ENCODE measurements at regions of chr7 and their contacts with region 1.

Region 1: GRCh38 chr7:44797329-44798251 is 1.1 kb downstream of the PPIA start:
- DNase-seq: peak; percentile 91
- H3K4me3 Mint-ChIP-seq: peak overlapping the region; percentile 97
- H3K27ac Mint-ChIP-seq: peak overlapping the region; percentile 99
- H3K4me1 Mint-ChIP-seq: peaks cover 31% of the 10 kb centered on the region
- H3K27me3 Mint-ChIP-seq: no peaks in the 10 kb centered on the region

Region 2: GRCh38 chr7:44490351-44491200 is 307.0 kb before region 1 on chr7 and contains the start of gene NUDCD3:
- CTCF ChIA-PET with region 1: interaction called, 3 read pairs
- POLR2A ChIA-PET with region 1: interaction called, 5 read pairs
- intact Hi-C with region 1: loop called (anchors 5 kb)
- DNase-seq: peak; percentile 89
- H3K4me3 Mint-ChIP-seq: peak within 1 kb of the TSS; percentile 87
- H3K27ac Mint-ChIP-seq: peak within 1 kb of the TSS; percentile 96
- H3K4me1 Mint-ChIP-seq: peaks cover 40% of the 10 kb centered on the region
- H3K27me3 Mint-ChIP-seq: no peaks in the 10 kb centered on the region
- total RNA-seq, gene NUDCD3: 88.9 to 92.4 TPM

Region 3: GRCh38 chr7:44606450-44607254 is 190.9 kb before region 1 on chr7 and contains the start of gene OGDH:
- CTCF ChIA-PET with region 1: interaction called, 3 read pairs
- POLR2A ChIA-PET with region 1: interaction called, 34 read pairs
- intact Hi-C with region 1: loop called (anchors 1 kb)
- DNase-seq: peak; percentile 100
- H3K4me3 Mint-ChIP-seq: peak within 1 kb of the TSS; percentile 82
- H3K27ac Mint-ChIP-seq: peak within 1 kb of the TSS; percentile 98
- H3K4me1 Mint-ChIP-seq: peaks cover 36% of the 10 kb centered on the region
- H3K27me3 Mint-ChIP-seq: no peaks in the 10 kb centered on the region
- total RNA-seq, gene OGDH: 103 to 105 TPM

Region 4: GRCh38 chr7:44735403-44736165 is 62.0 kb before region 1 on chr7:
- CTCF ChIA-PET with region 1: no interaction called
- POLR2A ChIA-PET with region 1: interaction called, 3 read pairs
- intact Hi-C with region 1: loop called (anchors 2 kb)
- DNase-seq: peak; percentile 62
- H3K4me3 Mint-ChIP-seq: peak overlapping the region; percentile 4
- H3K27ac Mint-ChIP-seq: peak overlapping the region; percentile 73
- H3K4me1 Mint-ChIP-seq: peaks cover 19% of the 10 kb centered on the region
- H3K27me3 Mint-ChIP-seq: no peaks in the 10 kb centered on the region

Region 5: DNA sequence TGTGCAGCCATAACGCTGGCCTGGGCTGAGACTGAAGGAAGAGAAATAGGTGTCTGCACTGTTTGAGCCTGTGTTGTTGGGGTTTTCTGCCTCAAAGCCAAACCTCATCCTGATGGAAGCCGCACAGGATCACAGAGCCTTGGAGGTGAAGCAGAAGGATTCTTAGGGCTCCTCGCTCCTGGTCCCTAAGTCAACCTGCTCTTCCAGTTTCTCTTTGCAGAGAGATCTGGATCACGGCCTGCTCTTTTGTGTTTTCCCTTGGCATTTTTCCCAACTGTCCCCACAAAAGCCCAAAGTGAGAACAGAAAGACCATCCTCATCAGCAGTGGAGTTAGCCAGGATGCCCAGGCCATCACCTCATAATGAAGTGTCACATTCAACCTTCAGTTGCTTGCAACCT is 21.4 kb before region 1 on chr7:
- CTCF ChIA-PET with region 1: no interaction called
- POLR2A ChIA-PET with region 1: no interaction called
- intact Hi-C with region 1: no loop called
- DNase-seq: no peak
- H3K4me3 Mint-ChIP-seq: no peak overlapping the region
- H3K27ac Mint-ChIP-seq: no peak overlapping the region
- H3K4me1 Mint-ChIP-seq: peaks cover 4% of the 10 kb centered on the region
- H3K27me3 Mint-ChIP-seq: no peaks in the 10 kb centered on the region

Region 6: GRCh38 chr7:44980393-44981034 is 182.9 kb after region 1 on chr7:
- CTCF ChIA-PET with region 1: no interaction called
- POLR2A ChIA-PET with region 1: interaction called, 9 read pairs
- intact Hi-C with region 1: loop called (anchors 1 kb)
- DNase-seq: peak; percentile 94
- H3K4me3 Mint-ChIP-seq: peak overlapping the region; percentile 97
- H3K27ac Mint-ChIP-seq: peak overlapping the region; percentile 100
- H3K4me1 Mint-ChIP-seq: peaks cover 67% of the 10 kb centered on the region
- H3K27me3 Mint-ChIP-seq: no peaks in the 10 kb centered on the region

Region 7: GRCh38 chr7:45252857-45253256 is 455.3 kb after region 1 on chr7:
- CTCF ChIA-PET with region 1: no interaction called
- POLR2A ChIA-PET with region 1: no interaction called
- intact Hi-C with region 1: no loop called
- DNase-seq: no peak
- H3K4me3 Mint-ChIP-seq: no peak overlapping the region
- H3K27ac Mint-ChIP-seq: no peak overlapping the region
- H3K4me1 Mint-ChIP-seq: no peaks in the 10 kb centered on the region
- H3K27me3 Mint-ChIP-seq: peaks cover 19% of the 10 kb centered on the region

Region 8: DNA sequence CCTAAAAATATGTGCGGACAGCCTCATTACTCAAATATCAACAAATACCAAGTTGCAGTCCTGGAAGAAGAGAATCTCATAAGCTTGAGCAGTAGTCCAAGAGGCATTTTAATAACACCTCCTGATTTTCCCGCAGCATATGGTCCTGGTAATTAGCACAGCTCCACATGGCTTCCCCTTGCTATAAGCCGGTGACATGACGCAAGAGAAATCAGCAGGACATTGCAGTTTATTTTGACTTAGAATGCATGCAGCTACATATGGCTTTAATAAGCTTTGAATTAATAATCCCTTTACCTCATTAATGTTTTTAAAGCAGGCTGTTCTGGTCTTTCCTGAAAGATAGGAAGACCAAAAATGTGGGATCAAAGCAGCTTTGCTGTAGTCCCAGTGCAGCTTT is 497.6 kb after region 1 on chr7:
- CTCF ChIA-PET with region 1: no interaction called
- POLR2A ChIA-PET with region 1: no interaction called
- intact Hi-C with region 1: no loop called
- DNase-seq: no peak
- H3K4me3 Mint-ChIP-seq: no peak overlapping the region
- H3K27ac Mint-ChIP-seq: no peak overlapping the region
- H3K4me1 Mint-ChIP-seq: no peaks in the 10 kb centered on the region
- H3K27me3 Mint-ChIP-seq: peaks cover 25% of the 10 kb centered on the region